ENCODE measurements at regions of chr1 and their contacts with region 1.

Region 1: DNA sequence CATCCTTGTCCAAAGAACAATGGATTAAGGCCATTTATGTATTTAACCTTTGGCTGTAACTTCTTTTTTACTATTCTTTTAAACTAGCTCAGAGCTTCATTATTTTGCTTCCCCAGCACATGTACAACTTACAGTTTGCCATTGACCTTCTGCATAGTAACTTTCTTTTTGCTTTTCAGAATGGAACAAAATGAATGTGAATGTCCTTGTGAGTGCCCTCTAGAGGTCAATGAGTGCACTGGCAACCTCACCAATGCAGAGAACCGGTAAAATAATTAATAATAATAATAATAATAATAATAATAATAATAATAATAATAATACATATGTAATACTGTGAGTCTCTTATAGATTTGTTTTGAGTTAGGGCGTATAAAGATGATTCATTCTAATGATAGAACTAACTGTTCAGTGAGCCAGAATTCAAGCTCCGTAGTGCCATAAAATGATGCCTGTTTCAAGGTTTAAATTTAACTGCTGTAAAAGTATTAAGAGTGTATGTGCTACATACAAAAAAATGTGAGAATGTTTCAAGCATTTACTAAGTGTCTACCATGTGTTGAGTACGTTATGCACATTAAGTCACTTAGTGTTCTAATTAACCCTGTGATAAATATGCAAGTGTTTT is 69.0 kb upstream of the RAVER2 start:
- DNase-seq: no peak
- H3K4me3 Mint-ChIP-seq: no peak overlapping the region
- H3K27ac Mint-ChIP-seq: no peak overlapping the region
- H3K4me1 Mint-ChIP-seq: no peaks in the 10 kb centered on the region
- H3K27me3 Mint-ChIP-seq: no peaks in the 10 kb centered on the region

Region 2: GRCh38 chr1:64663668-64664067 is 12.2 kb before region 1 on chr1:
- CTCF ChIA-PET with region 1: interaction called, 13 read pairs
- DNase-seq: peak; percentile 38
- H3K4me3 Mint-ChIP-seq: no peak overlapping the region
- H3K27ac Mint-ChIP-seq: no peak overlapping the region
- H3K4me1 Mint-ChIP-seq: no peaks in the 10 kb centered on the region
- H3K27me3 Mint-ChIP-seq: peaks cover 3% of the 10 kb centered on the region

Region 3: GRCh38 chr1:64711266-64711665 is 35.4 kb after region 1 on chr1:
- CTCF ChIA-PET with region 1: no interaction called
- DNase-seq: no peak
- H3K4me3 Mint-ChIP-seq: no peak overlapping the region
- H3K27ac Mint-ChIP-seq: no peak overlapping the region
- H3K4me1 Mint-ChIP-seq: no peaks in the 10 kb centered on the region
- H3K27me3 Mint-ChIP-seq: no peaks in the 10 kb centered on the region

Measured in activated naive CD4-positive, alpha-beta T cell treated with anti-CD3 and anti-CD28 coated beads, Interleukin-2, amount 10 ng/mL, durations not matched to agents 7 days and 5 days (primary cell).